Activated CD4-positive, alpha-beta T cell treated with anti-CD3 and anti-CD28 coated beads for 36 hours (primary cell): ENCODE measurements at regions of chr5 and their contacts with region 1.

Region 1: DNA sequence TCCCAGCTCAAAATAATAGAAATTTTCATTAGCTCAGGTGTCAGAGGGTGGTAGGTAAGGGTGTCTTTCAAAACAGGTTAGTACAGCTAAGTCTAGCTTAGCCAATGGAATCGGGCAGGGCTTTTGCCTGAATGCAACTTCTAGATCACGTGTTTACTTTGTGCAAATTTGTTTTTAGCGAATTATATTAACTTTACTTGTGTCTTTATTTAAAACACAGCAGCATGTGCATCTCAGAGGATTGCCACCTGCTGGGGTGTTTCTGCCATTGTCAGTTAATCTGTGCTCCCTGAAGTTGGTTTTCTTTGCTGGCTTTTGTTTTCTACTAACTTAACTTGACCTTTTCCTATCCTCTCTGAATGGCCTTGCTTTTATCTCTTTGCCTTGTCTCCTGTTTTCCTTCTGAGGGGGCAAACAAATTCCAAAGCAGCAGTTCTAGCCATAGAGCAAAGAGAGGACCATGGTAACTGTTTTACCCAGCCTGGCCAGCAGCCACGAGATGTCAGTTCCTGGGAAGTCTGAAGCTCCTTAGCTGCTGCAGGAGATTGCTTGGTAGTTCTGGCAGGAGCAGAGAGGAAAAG is 67.6 kb downstream of the ARHGEF28 start:
- DNase-seq: peak; percentile 26
- ATAC-seq: peak; percentile 25
- H3K4me3 Mint-ChIP-seq: no peak overlapping the region
- H3K27ac Mint-ChIP-seq: no peak overlapping the region
- H3K4me1 Mint-ChIP-seq: peaks cover 22% of the 10 kb centered on the region
- H3K27me3 Mint-ChIP-seq: peaks cover 16% of the 10 kb centered on the region

Region 2: GRCh38 chr5:73591102-73591695 is 102.4 kb before region 1 on chr5:
- CTCF ChIA-PET with region 1: interaction called, 5 read pairs
- POLR2A ChIA-PET with region 1: interaction called, 11 read pairs
- intact Hi-C with region 1: loop called (anchors 1 to 5 kb)
- DNase-seq: peak; percentile 44
- ATAC-seq: peak; percentile 63
- H3K4me3 Mint-ChIP-seq: no peak overlapping the region
- H3K27ac Mint-ChIP-seq: no peak overlapping the region
- H3K4me1 Mint-ChIP-seq: no peaks in the 10 kb centered on the region
- H3K27me3 Mint-ChIP-seq: no peaks in the 10 kb centered on the region

Region 3: DNA sequence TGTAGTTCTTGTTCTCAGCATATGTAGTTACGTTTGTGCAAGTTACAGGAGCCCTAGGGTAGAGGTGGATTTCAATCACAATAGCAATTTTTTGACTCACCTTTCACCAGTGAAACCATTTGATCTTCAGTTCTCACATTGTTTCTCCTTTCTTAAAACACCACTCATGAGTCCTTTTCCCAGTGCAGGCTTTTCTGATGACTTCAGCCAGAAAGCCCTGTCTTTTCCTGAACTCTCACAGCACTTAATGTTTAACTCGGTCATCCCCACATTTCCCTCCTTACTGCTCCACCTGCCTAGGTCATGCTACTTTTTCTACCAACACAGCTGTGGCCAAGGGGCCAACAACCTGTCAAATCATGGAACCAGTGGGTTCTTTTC is 29.7 kb before region 1 on chr5:
- CTCF ChIA-PET with region 1: no interaction called
- POLR2A ChIA-PET with region 1: no interaction called
- intact Hi-C with region 1: no loop called
- DNase-seq: no peak
- ATAC-seq: no peak
- H3K4me3 Mint-ChIP-seq: no peak overlapping the region
- H3K27ac Mint-ChIP-seq: no peak overlapping the region
- H3K4me1 Mint-ChIP-seq: no peaks in the 10 kb centered on the region
- H3K27me3 Mint-ChIP-seq: peaks cover 17% of the 10 kb centered on the region

Region 4: DNA sequence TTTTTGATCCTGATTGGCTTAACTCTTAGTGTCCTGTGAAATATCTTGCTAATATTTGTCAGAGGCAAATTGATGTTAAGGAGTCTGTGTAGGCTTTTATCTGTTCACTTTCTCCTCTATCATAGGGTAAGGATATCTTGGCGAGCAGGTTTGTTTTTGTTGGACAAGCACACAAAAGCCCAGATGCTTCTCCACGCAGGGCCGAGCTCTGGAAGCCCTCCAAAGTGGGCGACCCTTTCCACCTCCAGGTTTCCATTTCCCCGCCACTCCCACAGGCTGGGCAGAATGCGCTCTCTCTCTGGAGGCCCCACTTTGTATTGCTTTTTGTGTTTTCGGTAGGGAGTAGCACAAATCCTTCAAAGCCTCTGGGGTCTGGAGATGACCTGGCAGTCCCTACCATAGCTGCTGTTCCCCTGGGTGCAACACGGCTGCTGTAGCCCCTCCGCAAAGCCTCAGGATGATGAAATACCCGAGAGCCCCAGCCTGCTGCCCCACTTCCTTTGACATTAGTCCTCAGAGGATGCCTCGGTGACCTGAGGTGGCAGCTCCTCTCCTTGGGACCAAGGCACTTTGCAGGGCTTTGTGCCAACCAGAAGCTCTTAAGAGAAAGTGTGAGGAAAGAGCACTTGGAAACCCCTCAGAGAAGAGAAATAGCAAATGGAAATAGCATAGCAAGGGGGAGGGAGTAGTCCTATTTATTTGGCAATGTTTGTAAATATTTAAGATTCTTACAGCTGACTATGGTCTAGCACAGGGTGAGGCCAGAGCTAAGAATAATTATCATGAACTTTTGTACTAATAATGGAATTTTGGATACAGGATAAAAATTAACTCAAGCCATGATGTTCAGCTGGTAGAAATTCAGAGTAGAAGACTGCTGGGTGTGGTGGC is 55.2 kb after region 1 on chr5:
- CTCF ChIA-PET with region 1: no interaction called
- POLR2A ChIA-PET with region 1: no interaction called
- intact Hi-C with region 1: no loop called
- DNase-seq: no peak
- ATAC-seq: no peak
- H3K4me3 Mint-ChIP-seq: no peak overlapping the region
- H3K27ac Mint-ChIP-seq: no peak overlapping the region
- H3K4me1 Mint-ChIP-seq: no peaks in the 10 kb centered on the region
- H3K27me3 Mint-ChIP-seq: peaks cover 32% of the 10 kb centered on the region

Region 5: DNA sequence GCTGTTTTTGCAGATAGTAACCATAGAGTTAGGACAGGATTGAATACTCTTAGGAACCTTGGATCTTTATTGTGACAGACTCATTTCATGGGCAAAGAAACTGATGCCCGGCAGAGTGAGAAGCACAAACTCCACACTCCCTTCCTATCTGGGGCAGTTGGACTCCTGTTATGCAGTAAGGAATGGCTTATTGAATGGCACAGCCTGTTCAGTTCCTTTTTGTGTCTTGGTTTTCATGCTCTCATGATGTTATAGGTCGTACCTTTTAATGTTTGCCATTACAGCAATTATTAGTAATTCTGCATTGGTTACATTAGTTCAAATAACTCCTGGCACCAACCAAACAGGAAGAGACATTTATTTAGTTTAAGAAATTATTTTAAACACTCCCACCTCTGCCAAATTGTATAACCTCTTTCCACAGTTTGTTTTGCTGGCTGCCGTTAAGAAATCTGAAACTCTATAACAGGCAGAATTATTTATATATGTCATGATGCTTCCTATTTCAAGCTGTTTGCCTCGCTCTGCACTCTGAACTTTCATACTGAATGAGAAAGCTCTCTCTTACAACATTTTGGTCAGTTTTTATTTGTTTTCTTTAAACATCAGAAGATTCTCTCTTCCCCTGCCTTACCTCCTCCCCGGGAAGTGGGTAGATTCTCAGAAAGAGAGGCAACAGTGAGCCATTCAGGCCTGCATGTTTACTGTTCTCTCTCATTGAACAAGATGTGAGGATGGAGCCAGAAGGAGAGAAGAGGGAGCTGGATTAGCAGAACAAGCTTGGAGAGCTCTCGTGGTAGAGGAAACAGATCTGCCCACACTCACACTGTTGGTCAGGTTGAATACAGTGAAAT is 76.8 kb after region 1 on chr5:
- CTCF ChIA-PET with region 1: no interaction called
- POLR2A ChIA-PET with region 1: no interaction called
- intact Hi-C with region 1: no loop called
- DNase-seq: no peak
- ATAC-seq: no peak
- H3K4me3 Mint-ChIP-seq: no peak overlapping the region
- H3K27ac Mint-ChIP-seq: no peak overlapping the region
- H3K4me1 Mint-ChIP-seq: no peaks in the 10 kb centered on the region
- H3K27me3 Mint-ChIP-seq: no peaks in the 10 kb centered on the region

Region 6: DNA sequence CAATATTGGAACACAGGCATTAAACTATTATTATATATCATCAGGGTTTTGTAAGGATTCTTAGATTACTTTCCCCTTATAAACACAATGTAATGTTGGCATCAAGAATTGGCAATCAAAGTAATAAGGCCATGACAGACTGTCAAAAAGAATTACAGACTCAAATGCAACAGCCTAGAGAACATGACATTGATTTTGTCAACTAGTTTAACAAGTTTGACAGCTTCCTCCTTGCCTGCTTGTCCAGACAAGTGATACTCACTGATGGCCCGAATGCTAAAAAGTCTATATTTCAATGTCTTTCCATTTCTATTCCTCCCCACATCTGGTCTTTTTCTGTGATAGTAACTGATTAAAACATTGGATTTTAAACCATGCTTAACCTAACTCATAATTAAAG is 1549.5 kb after region 1 on chr5:
- CTCF ChIA-PET with region 1: no interaction called
- POLR2A ChIA-PET with region 1: no interaction called
- intact Hi-C with region 1: no loop called
- DNase-seq: no peak
- ATAC-seq: no peak
- H3K4me3 Mint-ChIP-seq: no peak overlapping the region
- H3K27ac Mint-ChIP-seq: no peak overlapping the region
- H3K4me1 Mint-ChIP-seq: no peaks in the 10 kb centered on the region
- H3K27me3 Mint-ChIP-seq: no peaks in the 10 kb centered on the region

Region 7: DNA sequence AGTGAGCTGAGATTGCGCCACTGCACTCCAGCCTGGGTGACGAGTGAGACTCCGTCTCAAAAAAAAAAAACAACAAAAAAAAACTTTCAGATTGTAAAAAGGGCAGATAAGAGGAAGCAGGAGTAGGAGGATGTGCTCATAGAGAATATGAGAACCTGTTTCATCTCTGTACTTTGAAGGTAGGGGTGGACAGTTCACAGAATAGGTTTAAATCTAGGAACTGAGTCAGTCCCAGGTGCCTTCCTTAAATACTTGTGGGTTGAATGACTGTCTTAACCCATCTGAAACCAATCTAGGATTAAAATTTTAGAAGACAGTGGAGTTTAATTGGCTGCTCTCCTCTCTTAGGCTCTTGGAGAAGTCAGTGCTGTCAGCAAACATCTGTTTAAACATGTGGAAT is 1830.5 kb after region 1 on chr5:
- CTCF ChIA-PET with region 1: no interaction called
- POLR2A ChIA-PET with region 1: no interaction called
- intact Hi-C with region 1: loop called in 1 of 2 experiments (anchors 10 kb)
- DNase-seq: peak; percentile 29
- ATAC-seq: peak; percentile 97
- H3K4me3 Mint-ChIP-seq: peak overlapping the region; percentile 20
- H3K27ac Mint-ChIP-seq: peak overlapping the region; percentile 61
- H3K4me1 Mint-ChIP-seq: peaks cover 59% of the 10 kb centered on the region
- H3K27me3 Mint-ChIP-seq: no peaks in the 10 kb centered on the region